Naive thymus-derived CD4-positive, alpha-beta T cell (primary cell): ENCODE measurements at regions of chr5 and their contacts with region 1.

Region 1: DNA sequence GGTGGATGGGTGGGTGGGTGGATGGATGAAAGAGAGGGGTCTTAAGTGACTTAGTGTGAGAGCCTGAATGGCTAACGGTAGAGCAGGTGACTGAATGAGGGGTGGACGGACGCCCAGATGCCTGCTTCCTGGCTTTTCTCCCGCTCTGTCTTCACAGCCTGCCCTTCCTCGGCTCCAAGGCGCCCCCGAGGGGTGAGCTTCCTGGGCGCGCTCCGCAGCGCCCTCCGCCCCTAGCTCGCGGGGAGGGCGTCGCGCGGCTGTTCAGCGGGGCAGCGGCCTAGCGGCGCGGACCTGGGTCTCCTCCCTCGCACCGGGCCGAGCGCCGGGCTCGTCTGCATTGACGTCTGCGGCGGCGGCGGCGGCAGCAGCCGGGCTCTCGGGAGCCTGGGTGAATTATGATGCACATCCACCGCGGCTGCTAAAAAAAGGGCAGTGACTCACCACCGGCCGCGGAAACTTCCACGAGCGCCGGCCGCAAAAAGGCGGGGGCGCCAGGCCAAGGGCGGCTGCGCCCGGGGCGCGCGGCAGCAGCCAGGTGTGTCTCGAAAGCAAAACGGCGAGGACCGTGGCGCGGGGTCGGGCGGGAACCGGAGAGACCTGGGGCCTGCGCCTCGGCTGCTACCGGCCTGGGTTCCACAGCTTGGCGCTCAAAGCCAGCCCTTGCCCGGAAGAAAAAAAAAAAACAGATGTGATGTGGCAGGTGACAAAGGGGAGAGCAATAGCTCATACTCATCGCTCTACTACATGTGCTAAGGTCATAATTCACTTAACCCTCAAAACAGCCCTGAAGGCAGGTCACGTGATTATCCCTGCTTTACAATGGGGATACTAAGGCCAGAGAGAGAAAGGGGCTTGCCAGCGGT is 143.0 kb upstream of the ADRA1B start:
- DNase-seq: peak in 3 of 9 donors; percentile 2 to 90 (median 31)
- ATAC-seq: peak; percentile 83
- H3K4me3 ChIP-seq: no peak overlapping the region
- H3K4me3 Mint-ChIP-seq: peak overlapping the region; percentile 46 to 79 (median 68)
- H3K27ac ChIP-seq: no peak overlapping the region
- H3K27ac Mint-ChIP-seq: peak overlapping the region in 1 of 9 donors; percentile 61
- H3K4me1 ChIP-seq: no peaks in the 10 kb centered on the region
- H3K4me1 Mint-ChIP-seq: peaks cover 5 to 21% (median 7%) of the 10 kb centered on the region in 7 donors
- H3K27me3 ChIP-seq: peaks cover 0 to 6% of the 10 kb centered on the region in 2 donors
- H3K27me3 Mint-ChIP-seq: peaks cover 28 to 37% (median 29%) of the 10 kb centered on the region in 5 donors

Region 2: GRCh38 chr5:159331093-159331973 is 442.0 kb before region 1 on chr5:
- CTCF ChIA-PET with region 1: no interaction called
- POLR2A ChIA-PET with region 1: no interaction called
- intact Hi-C with region 1: loop called in 1 of 2 experiments (anchors 5 kb)
- DNase-seq: peak; percentile 43 to 79 (median 65)
- ATAC-seq: peak; percentile 93
- H3K4me3 ChIP-seq: peak overlapping the region; percentile 46
- H3K4me3 Mint-ChIP-seq: peak overlapping the region; percentile 66 to 80 (median 74)
- H3K27ac ChIP-seq: peak overlapping the region; percentile 22
- H3K27ac Mint-ChIP-seq: peak overlapping the region in 6 of 9 donors; percentile 9 to 75 (median 64)
- H3K4me1 ChIP-seq: peaks cover 0 to 4% of the 10 kb centered on the region in 2 donors
- H3K4me1 Mint-ChIP-seq: peaks cover 3 to 52% (median 23%) of the 10 kb centered on the region in 7 donors
- H3K27me3 ChIP-seq: no peaks in the 10 kb centered on the region
- H3K27me3 Mint-ChIP-seq: peaks cover 0 to 35% (median 0%) of the 10 kb centered on the region in 5 donors

Region 3: GRCh38 chr5:159456722-159457465 is 316.4 kb before region 1 on chr5:
- CTCF ChIA-PET with region 1: no interaction called
- POLR2A ChIA-PET with region 1: no interaction called
- intact Hi-C with region 1: loop called in 1 of 2 experiments (anchors 10 kb)
- DNase-seq: peak in 1 of 9 donors; percentile 56
- ATAC-seq: peak; percentile 50
- H3K4me3 ChIP-seq: no peak overlapping the region
- H3K4me3 Mint-ChIP-seq: no peak overlapping the region
- H3K27ac ChIP-seq: no peak overlapping the region
- H3K27ac Mint-ChIP-seq: no peak overlapping the region
- H3K4me1 ChIP-seq: no peaks in the 10 kb centered on the region
- H3K4me1 Mint-ChIP-seq: peaks cover 0 to 40% (median 0%) of the 10 kb centered on the region in 7 donors
- H3K27me3 ChIP-seq: no peaks in the 10 kb centered on the region
- H3K27me3 Mint-ChIP-seq: peaks cover 0 to 70% (median 4%) of the 10 kb centered on the region in 5 donors

Region 4: GRCh38 chr5:159819591-159820411 is 46.5 kb after region 1 on chr5:
- CTCF ChIA-PET with region 1: no interaction called
- POLR2A ChIA-PET with region 1: no interaction called
- intact Hi-C with region 1: loop called in 1 of 2 experiments (anchors 1 kb)
- DNase-seq: no peak
- ATAC-seq: no peak
- H3K4me3 ChIP-seq: no peak overlapping the region
- H3K4me3 Mint-ChIP-seq: no peak overlapping the region
- H3K27ac ChIP-seq: no peak overlapping the region
- H3K27ac Mint-ChIP-seq: no peak overlapping the region
- H3K4me1 ChIP-seq: no peaks in the 10 kb centered on the region
- H3K4me1 Mint-ChIP-seq: no peaks in the 10 kb centered on the region
- H3K27me3 ChIP-seq: no peaks in the 10 kb centered on the region
- H3K27me3 Mint-ChIP-seq: peaks cover 4 to 18% (median 7%) of the 10 kb centered on the region in 5 donors